Activated CD8-positive, alpha-beta T cell treated with anti-CD3 and anti-CD28 coated beads, Interleukin-2, amount 10 ng/mL, durations not matched to agents 7 days and 5 days (primary cell): ENCODE measurements at regions of chr4 and their contacts with region 1.

Region 1: DNA sequence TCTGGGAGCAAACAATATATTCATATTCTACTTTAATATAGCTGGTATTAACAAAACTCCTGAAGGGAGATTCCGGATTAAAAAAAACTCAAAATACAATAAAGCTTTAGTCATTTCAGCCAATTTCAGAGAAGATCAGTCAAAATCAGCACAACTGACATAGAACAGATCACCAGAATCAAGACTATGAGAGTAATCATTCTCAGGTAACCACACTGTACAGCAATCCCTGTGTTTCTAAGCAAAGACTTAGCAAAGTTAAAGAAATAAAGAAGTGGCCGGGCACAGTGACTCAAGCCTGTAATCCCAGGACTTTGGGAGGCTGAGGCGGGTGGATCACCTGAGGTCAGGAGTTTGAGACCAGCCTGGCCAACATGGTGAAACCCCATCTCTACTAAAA is 9.1 kb downstream of the DCTD start:
- DNase-seq: no peak
- ATAC-seq: no peak
- H3K4me3 Mint-ChIP-seq: no peak overlapping the region
- H3K27ac Mint-ChIP-seq: no peak overlapping the region
- H3K4me1 Mint-ChIP-seq: peaks cover 8% of the 10 kb centered on the region
- H3K27me3 Mint-ChIP-seq: no peaks in the 10 kb centered on the region

Region 2: DNA sequence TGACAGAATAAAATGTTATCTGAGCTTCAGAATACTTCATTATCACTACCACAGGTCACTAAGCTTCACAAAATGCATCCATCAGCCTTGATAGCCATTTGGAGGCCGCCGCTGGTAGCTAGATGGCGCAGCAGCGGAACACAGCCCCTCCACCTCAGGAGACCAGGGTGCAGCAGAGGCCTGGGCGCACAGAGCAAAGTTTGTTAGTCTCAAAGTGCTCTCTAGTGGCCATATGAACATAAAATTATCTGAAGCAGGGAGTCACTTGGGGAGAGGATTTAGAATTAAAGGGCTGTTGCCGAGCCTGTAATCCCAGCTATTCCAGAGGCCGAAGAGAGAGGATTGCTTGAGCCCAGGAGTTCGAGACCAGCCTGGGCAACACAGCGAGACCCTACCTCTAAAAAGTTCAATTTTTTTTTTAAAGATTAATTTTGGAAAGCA is 17.2 kb after region 1 on chr4:
- CTCF ChIA-PET with region 1: interaction called, 11 read pairs
- POLR2A ChIA-PET with region 1: no interaction called
- DNase-seq: peak; percentile 72
- ATAC-seq: peak; percentile 96
- H3K4me3 Mint-ChIP-seq: no peak overlapping the region
- H3K27ac Mint-ChIP-seq: no peak overlapping the region
- H3K4me1 Mint-ChIP-seq: peaks cover 4% of the 10 kb centered on the region
- H3K27me3 Mint-ChIP-seq: peaks cover 15% of the 10 kb centered on the region

Region 3: DNA sequence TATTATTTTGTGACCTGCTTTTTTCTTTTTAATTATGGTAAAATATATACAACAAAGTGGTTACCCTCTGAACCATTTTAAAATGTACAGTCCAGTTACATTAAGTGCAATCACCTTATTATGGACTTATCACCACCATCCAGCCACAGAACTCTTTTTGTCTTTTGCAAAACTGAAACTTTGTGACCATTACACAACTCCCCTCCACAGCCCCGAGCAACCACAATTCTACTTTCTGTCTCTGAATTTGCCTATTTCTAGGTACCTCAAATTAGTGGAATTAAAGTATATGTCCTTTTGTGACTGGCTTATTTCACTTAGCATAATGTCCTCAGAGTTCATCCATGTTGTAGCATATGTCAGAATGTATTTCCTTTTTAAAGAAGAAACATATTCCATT is 151.7 kb after region 1 on chr4:
- CTCF ChIA-PET with region 1: no interaction called
- POLR2A ChIA-PET with region 1: no interaction called
- DNase-seq: no peak
- ATAC-seq: no peak
- H3K4me3 Mint-ChIP-seq: no peak overlapping the region
- H3K27ac Mint-ChIP-seq: no peak overlapping the region
- H3K4me1 Mint-ChIP-seq: no peaks in the 10 kb centered on the region
- H3K27me3 Mint-ChIP-seq: peaks cover 4% of the 10 kb centered on the region